Activated T-helper 2 cell treated with anti-CD3 and anti-CD28 coated beads, Interferon-gamma antibody, Interleukin-2, Interleukin-4, amounts not matched to agents 10 μg/mL and 5 μg/mL and 100 μg/mL, durations not matched to agents 14 hours and 24 hours and 36 hours (primary cell): ENCODE measurements at regions of chr6 and their contacts with region 1.

Region 1: GRCh38 chr6:36678518-36679027 is at the start of gene CDKN1A:
- DNase-seq: peak; percentile 76
- H3K4me3 Mint-ChIP-seq: peak within 1 kb of the TSS; percentile 96
- H3K27ac Mint-ChIP-seq: peak within 1 kb of the TSS; percentile 89
- H3K4me1 Mint-ChIP-seq: peaks cover 54% of the 10 kb centered on the region
- H3K27me3 Mint-ChIP-seq: peaks cover 3% of the 10 kb centered on the region
- total RNA-seq, gene CDKN1A: 43.9 and 45.3 TPM in 2 replicates

Region 2: DNA sequence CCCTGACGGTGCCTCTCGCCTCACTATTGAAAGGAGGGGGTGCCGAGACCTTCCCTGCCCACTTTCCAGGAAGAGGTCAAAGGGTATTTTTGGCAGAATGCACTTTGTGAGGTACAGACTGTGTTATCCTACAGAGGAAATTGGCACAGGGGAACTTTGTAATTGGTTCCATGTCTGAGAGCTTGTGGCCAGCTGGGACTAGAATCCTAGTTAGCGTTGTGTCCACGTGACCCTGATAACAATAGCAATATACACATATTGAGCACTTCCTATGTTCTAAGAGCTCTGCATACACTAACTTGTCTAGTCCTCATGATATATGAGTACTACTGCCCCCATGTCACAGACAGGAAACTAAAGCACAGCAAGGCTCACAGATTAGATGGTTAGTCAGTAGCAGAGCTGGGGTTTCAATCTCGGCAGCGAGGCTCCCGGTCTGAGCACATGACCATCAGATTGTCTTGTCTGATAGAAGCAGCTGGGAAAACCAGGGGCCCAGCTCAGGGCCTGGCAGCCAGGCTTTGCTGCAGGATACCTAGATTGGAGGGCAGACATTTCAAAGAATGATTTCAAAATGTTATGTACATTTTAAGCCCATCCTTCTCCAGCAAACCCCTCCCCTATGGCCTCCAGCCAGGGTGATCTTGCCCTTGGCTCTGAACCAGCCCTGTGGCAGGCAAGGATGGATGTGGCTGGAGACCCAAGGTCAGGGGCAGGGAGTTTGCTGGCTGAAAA is 546.9 kb before region 1 on chr6:
- intact Hi-C with region 1: loop called (anchors 10 kb)
- DNase-seq: peak; percentile 45
- H3K4me3 Mint-ChIP-seq: peak overlapping the region; percentile 75
- H3K27ac Mint-ChIP-seq: peak overlapping the region; percentile 92
- H3K4me1 Mint-ChIP-seq: peaks cover 29% of the 10 kb centered on the region
- H3K27me3 Mint-ChIP-seq: no peaks in the 10 kb centered on the region

Region 3: GRCh38 chr6:36414481-36414880 is 264.1 kb before region 1 on chr6:
- intact Hi-C with region 1: no loop called
- DNase-seq: no peak
- H3K4me3 Mint-ChIP-seq: no peak overlapping the region
- H3K27ac Mint-ChIP-seq: no peak overlapping the region
- H3K4me1 Mint-ChIP-seq: no peaks in the 10 kb centered on the region
- H3K27me3 Mint-ChIP-seq: peaks cover 20% of the 10 kb centered on the region

Region 4: GRCh38 chr6:36442671-36443470 is 235.7 kb before region 1 on chr6 and contains the starts of genes KCTD20 and PXT1:
- intact Hi-C with region 1: loop called (anchors 5 kb)
- DNase-seq: peak; percentile 84
- H3K4me3 Mint-ChIP-seq: peak within 1 kb of the TSS; percentile 93
- H3K27ac Mint-ChIP-seq: peak within 1 kb of the TSS; percentile 97
- H3K4me1 Mint-ChIP-seq: peaks cover 30% of the 10 kb centered on the region
- H3K27me3 Mint-ChIP-seq: no peaks in the 10 kb centered on the region
- total RNA-seq, gene KCTD20: 51.1 and 54.8 TPM in 2 replicates
- total RNA-seq, gene PXT1: 0.14 and 0.27 TPM in 2 replicates

Region 5: DNA sequence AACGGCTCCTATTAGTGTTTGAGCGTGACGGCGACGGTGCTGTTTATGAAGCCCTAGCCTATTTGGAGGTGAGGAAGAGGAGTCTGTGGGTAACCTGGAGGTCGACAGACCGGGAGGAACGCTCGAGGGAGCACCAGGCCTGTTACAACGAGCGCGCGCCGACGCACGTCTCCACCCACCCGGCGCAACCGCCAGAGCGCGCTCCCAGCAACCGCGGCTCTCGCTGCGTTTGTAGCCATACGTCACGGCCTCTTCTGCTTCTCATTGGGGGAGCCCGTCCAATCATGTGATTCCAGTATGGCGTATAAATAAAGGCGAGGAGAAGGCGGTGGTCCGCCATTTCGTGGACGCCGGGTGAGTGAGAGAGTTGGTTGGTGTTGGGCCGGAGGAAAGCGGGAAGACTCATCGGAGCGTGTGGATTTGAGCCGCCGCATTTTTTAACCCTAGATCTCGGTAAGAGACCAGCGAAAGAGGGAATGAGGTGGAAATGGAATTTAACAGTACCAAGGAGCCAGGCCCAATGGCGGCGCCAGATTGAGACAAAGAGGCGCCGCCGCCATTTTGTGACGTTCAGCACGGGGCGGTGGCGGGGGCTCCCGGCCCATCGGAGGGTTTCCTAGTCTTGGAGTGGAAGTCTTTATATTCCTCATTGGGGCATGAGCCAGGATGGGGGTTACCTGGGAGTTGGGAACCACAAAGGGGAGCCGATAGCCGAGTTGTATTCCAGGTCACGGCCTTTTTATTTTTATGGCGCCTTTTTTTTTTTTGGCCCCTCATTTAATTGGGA is 84.4 kb before region 1 on chr6 and contains the start of gene SRSF3:
- intact Hi-C with region 1: loop called (anchors 2 kb)
- DNase-seq: peak; percentile 96
- H3K4me3 Mint-ChIP-seq: peak within 1 kb of the TSS; percentile 96
- H3K27ac Mint-ChIP-seq: peak within 1 kb of the TSS; percentile 99
- H3K4me1 Mint-ChIP-seq: peaks cover 26% of the 10 kb centered on the region
- H3K27me3 Mint-ChIP-seq: no peaks in the 10 kb centered on the region
- total RNA-seq, gene SRSF3: 512 and 541 TPM in 2 replicates

Region 6: GRCh38 chr6:36633915-36634314 is 44.7 kb before region 1 on chr6:
- intact Hi-C with region 1: loop called (anchors 2 kb)
- DNase-seq: no peak
- H3K4me3 Mint-ChIP-seq: no peak overlapping the region
- H3K27ac Mint-ChIP-seq: no peak overlapping the region
- H3K4me1 Mint-ChIP-seq: peaks cover 2% of the 10 kb centered on the region
- H3K27me3 Mint-ChIP-seq: no peaks in the 10 kb centered on the region

Region 7: GRCh38 chr6:36759148-36759759 is 80.7 kb after region 1 on chr6:
- intact Hi-C with region 1: loop called (anchors 2 kb)
- DNase-seq: peak; percentile 73
- H3K4me3 Mint-ChIP-seq: no peak overlapping the region
- H3K27ac Mint-ChIP-seq: no peak overlapping the region
- H3K4me1 Mint-ChIP-seq: peaks cover 40% of the 10 kb centered on the region
- H3K27me3 Mint-ChIP-seq: no peaks in the 10 kb centered on the region

Region 8: GRCh38 chr6:36827261-36828079 is 148.9 kb after region 1 on chr6:
- intact Hi-C with region 1: no loop called
- DNase-seq: no peak
- H3K4me3 Mint-ChIP-seq: no peak overlapping the region
- H3K27ac Mint-ChIP-seq: no peak overlapping the region
- H3K4me1 Mint-ChIP-seq: peaks cover 7% of the 10 kb centered on the region
- H3K27me3 Mint-ChIP-seq: peaks cover 4% of the 10 kb centered on the region

Region 9: DNA sequence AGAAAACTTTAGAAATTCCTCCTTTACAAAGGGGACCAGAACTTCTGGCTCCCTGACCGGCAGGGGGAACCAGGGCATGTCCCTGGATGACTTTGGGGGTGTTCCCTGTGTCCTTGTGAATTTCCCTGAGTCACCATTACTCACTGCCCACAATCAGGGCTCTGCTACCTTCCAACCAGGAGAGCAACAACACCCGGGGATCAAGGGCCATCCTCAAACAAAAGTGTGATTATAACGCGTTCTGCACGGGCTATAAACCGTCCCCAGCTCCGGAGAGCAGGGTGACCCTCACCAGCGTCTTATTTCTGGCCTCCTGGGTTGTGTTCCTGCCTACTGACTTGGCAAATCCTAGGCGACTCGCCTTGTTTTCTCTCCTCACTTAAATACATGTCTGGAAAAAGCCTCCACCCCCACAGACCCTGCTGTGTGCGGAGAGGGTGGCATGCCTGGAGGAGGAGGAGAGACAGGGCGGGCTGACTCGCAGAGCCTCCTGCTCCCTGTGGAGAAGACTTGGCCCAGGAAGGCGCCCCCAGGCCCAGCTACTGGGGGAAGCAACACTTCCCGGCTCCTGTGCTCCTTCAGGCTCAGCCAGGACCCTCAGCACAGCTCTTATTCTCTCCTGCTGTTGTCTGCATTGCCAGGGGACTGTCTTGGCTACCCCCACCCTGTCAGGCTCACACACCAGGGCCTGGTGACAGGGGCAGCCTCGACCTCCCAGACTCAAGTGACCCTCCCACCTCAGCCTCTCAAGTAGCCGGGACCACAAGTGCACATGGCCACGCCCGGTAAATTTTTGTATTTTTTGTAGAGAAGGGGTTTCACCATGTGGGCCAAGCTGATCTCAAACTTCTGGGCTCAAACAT is 381.0 kb after region 1 on chr6:
- intact Hi-C with region 1: no loop called
- DNase-seq: no peak
- H3K4me3 Mint-ChIP-seq: no peak overlapping the region
- H3K27ac Mint-ChIP-seq: no peak overlapping the region
- H3K4me1 Mint-ChIP-seq: peaks cover 14% of the 10 kb centered on the region
- H3K27me3 Mint-ChIP-seq: no peaks in the 10 kb centered on the region